HCT116 (cell line): ENCODE measurements at regions of chr5 and their contacts with region 1.

Region 1: GRCh38 chr5:34062419-34062818 is 19.4 kb upstream of the C1QTNF3 start:
- DNase-seq: no peak
- ATAC-seq: no peak
- H3K4me3 ChIP-seq: no peak overlapping the region
- H3K27ac ChIP-seq: no peak overlapping the region
- H3K4me1 ChIP-seq: no peaks in the 10 kb centered on the region
- H3K27me3 ChIP-seq: no peaks in the 10 kb centered on the region
- CTCF ChIP-seq: no peak
- POLR2A ChIP-seq: no peak
- RAD21 ChIP-seq: no peak

Region 2: DNA sequence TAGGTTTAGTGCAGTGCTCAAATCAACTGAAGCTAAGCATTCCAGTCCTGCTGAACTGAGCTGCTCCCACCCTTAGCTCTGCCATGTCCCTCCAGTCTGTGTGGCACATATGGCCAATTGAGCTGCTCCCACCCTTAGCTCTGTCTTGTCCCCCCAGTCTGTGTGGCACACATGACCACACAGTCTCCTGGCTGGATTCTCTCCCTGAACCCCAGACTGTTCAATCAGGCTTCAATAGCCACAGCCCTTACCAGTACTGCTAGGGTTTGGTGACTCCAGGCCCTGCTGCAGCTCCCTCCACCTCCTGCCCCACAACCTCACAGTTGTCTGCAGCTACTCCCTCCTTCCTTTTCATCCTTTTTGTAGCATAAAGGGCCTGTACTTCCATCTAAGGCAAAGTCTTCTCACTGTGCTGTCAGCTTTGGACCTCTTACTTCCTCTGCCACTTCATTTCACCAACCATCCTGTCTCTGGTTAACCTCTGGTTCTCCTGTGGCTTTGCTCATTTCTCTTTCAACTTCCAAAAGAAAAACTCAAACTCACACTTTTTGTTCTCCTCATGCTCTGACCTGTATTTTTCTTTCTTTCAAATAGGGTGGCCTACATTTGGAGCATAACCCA is 221.4 kb before region 1 on chr5:
- CTCF ChIA-PET with region 1: no interaction called
- POLR2A ChIA-PET with region 1: no interaction called
- RAD21 ChIA-PET with region 1: no interaction called
- intact Hi-C with region 1: no loop called
- DNase-seq: no peak
- ATAC-seq: no peak
- H3K4me3 ChIP-seq: no peak overlapping the region
- H3K27ac ChIP-seq: no peak overlapping the region
- H3K4me1 ChIP-seq: no peaks in the 10 kb centered on the region
- H3K27me3 ChIP-seq: 0 out of 2 replicates have a peak, but pooled peaks cover 4% of the 10 kb centered on the region
- CTCF ChIP-seq: no peak
- POLR2A ChIP-seq: no peak
- RAD21 ChIP-seq: no peak

Region 3: GRCh38 chr5:34016222-34016621 is 46.2 kb before region 1 on chr5:
- CTCF ChIA-PET with region 1: no interaction called
- POLR2A ChIA-PET with region 1: no interaction called
- RAD21 ChIA-PET with region 1: no interaction called
- intact Hi-C with region 1: loop called (anchors 1 kb)
- DNase-seq: no peak
- ATAC-seq: no peak
- H3K4me3 ChIP-seq: no peak overlapping the region
- H3K27ac ChIP-seq: no peak overlapping the region
- H3K4me1 ChIP-seq: no peaks in the 10 kb centered on the region
- H3K27me3 ChIP-seq: no peaks in the 10 kb centered on the region
- CTCF ChIP-seq: no peak
- POLR2A ChIP-seq: no peak
- RAD21 ChIP-seq: no peak

Region 4: DNA sequence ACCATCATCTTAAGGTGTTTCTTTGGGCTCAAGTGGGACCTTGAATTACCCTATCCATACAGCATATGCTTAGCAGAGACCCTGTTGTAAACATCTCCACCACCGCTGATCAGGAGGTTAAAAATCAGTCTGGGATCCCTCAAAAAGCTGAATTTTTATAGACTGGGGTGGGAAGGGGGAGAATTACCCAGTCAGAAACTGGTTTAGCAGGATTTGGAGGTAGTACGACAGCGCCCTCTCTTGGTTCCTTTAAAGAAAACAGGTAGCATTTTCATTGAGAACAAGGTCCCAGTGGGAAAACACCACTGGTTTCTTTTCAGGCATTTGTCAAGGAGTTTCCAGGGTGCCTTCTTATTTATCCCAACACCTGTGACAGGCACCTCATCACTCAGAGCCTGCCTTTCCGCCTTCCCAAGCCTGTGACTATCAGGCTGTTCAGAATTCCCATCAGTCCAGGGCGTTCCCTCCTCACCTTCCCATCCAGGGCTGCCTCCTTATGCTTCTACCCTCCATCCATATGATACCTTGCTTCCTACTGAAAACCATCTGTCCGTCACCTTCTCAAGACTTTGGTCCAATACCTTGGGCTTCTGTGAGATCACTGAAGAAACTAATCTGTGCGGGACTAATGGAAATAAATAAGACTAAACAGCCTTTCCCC is 389.9 kb after region 1 on chr5:
- CTCF ChIA-PET with region 1: no interaction called
- POLR2A ChIA-PET with region 1: no interaction called
- RAD21 ChIA-PET with region 1: no interaction called
- intact Hi-C with region 1: no loop called
- DNase-seq: peak; percentile 34
- ATAC-seq: peak; percentile 63; the same call in 1 of the 2 replicates
- H3K4me3 ChIP-seq: no peak overlapping the region
- H3K27ac ChIP-seq: no peak overlapping the region
- H3K4me1 ChIP-seq: no peaks in the 10 kb centered on the region
- H3K27me3 ChIP-seq: no peaks in the 10 kb centered on the region
- CTCF ChIP-seq: peak; percentile 49 to 70 (median 62)
- POLR2A ChIP-seq: no peak
- RAD21 ChIP-seq: peak; percentile 82